ENCODE measurements at regions of chr12 and their contacts with region 1.

Region 1: GRCh38 chr12:109775172-109775881 is 57.9 kb downstream of the TRPV4 start:
- DNase-seq: no peak
- H3K4me3 ChIP-seq: no peak overlapping the region
- CTCF ChIP-seq: peak; percentile 91

Region 2: DNA sequence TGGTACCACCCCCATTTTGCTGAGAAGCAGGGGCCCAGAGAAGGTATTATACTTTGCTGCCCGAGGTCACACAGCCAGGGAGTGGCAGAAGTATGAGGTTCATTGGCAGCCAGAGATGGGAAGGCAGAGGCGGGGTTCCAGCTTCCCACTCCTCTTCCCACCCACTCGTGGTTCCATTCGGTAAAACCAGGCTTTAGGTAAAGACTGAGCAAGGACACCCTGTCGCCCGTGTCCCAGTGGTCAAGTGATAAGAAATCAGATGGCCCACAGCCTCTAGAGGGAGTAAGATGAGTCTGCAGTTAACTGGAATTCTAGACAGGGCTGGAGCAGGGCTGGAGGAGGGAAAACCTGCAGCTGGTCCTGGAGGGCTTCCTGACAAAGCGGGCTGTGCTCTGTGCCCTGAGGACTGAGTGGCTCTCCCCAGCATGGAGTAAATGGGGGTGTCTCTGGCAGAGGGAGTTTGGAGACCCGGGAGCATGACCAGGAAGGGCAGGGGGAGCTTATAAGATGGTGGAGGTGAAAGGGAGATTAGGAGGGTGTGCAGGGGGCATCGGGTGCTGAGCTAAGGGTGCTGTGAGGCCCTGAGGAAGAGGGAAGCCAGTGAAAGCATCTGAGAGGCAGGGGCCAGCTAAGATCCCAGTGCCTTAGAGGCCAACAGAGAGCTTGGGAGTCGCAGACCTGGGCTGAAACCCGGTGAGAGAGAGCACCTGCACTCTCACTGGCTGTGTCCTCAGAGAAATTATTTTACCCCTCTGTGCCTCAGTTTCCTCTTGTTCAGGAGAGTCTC is 55.9 kb before region 1 on chr12:
- CTCF ChIA-PET with region 1: interaction called, 14 read pairs
- POLR2A ChIA-PET with region 1: no interaction called
- DNase-seq: no peak
- H3K4me3 ChIP-seq: no peak overlapping the region
- CTCF ChIP-seq: peak; percentile 28

Region 3: DNA sequence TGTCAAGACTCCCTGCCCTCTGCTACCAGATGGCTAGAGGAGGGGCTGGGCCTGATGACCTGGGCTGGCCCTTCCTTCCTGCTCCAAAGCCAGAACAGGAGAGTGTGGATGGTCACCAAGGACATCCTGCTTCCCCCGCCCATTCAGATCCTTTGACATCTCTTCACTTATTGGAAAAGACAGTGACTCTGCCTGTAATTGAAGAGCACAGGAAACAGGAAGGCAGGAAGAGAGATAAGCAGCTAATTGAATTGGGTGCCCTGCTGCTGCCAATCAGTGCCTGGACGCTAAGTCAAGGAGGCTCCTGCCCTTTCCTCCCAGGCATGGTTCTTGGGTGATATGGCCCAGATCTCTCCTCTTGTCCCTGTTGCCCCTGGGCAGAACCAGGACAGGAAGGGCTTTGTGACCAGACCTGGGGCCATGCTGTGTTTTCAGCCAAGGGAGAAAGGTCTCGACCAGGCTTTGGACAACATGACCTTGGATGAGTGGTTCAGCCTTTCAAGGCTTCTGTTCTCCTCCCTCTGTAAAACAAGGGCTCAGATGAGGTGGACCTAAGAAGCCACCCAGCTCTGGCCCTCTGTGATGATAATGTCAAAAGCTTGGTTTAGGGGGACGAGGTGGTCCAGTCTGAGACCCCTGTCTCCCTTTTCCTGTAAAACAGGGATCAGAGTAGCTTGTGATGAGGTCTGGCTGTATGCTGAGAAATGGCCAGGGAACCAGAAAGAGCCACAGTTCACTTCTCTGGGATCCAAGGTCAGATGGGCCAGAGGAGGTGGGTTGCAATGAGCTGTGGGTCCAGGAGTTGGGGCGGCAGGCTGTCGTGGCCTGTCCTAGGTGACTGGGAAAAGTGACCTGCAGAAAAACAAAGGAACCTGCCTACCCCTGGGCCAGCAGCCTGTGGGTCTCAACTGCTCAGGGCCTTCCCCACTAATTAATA is 22.9 kb before region 1 on chr12:
- CTCF ChIA-PET with region 1: interaction called, 12 read pairs
- POLR2A ChIA-PET with region 1: no interaction called
- DNase-seq: no peak
- H3K4me3 ChIP-seq: no peak overlapping the region
- CTCF ChIP-seq: no peak

Region 4: GRCh38 chr12:109763201-109763841 is 12.0 kb before region 1 on chr12:
- CTCF ChIA-PET with region 1: interaction called, 54 read pairs
- POLR2A ChIA-PET with region 1: no interaction called
- DNase-seq: no peak
- H3K4me3 ChIP-seq: no peak overlapping the region
- CTCF ChIP-seq: no peak

Measured in AG04449 (cell line).